A673 (cell line): ENCODE measurements at regions of chr4 and their contacts with region 1.

Region 1: GRCh38 chr4:184375027-184375426 is 99.3 kb downstream of the IRF2 start:
- DNase-seq: no peak
- H3K4me3 ChIP-seq: no peak overlapping the region
- H3K27ac ChIP-seq: no peak overlapping the region
- H3K4me1 ChIP-seq: peaks cover 20% of the 10 kb centered on the region
- H3K27me3 ChIP-seq: no peaks in the 10 kb centered on the region
- CTCF ChIP-seq: no peak

Region 2: GRCh38 chr4:184355111-184355604 is 19.9 kb before region 1 on chr4:
- CTCF ChIA-PET with region 1: interaction called, 12 read pairs
- POLR2A ChIA-PET with region 1: interaction called, 8 read pairs
- intact Hi-C with region 1: loop called (anchors 1 kb)
- DNase-seq: peak; percentile 98
- H3K4me3 ChIP-seq: no peak overlapping the region
- H3K27ac ChIP-seq: peak overlapping the region; percentile 93
- H3K4me1 ChIP-seq: peaks cover 57% of the 10 kb centered on the region
- H3K27me3 ChIP-seq: no peaks in the 10 kb centered on the region
- CTCF ChIP-seq: no peak

Region 3: GRCh38 chr4:184400375-184400870 is 25.4 kb after region 1 on chr4:
- CTCF ChIA-PET with region 1: interaction called, 3 read pairs
- POLR2A ChIA-PET with region 1: no interaction called
- intact Hi-C with region 1: loop called (anchors 1 kb)
- DNase-seq: peak; percentile 58
- H3K4me3 ChIP-seq: no peak overlapping the region
- H3K27ac ChIP-seq: peak overlapping the region; percentile 32
- H3K4me1 ChIP-seq: peaks cover 26% of the 10 kb centered on the region
- H3K27me3 ChIP-seq: no peaks in the 10 kb centered on the region
- CTCF ChIP-seq: no peak

Region 4: DNA sequence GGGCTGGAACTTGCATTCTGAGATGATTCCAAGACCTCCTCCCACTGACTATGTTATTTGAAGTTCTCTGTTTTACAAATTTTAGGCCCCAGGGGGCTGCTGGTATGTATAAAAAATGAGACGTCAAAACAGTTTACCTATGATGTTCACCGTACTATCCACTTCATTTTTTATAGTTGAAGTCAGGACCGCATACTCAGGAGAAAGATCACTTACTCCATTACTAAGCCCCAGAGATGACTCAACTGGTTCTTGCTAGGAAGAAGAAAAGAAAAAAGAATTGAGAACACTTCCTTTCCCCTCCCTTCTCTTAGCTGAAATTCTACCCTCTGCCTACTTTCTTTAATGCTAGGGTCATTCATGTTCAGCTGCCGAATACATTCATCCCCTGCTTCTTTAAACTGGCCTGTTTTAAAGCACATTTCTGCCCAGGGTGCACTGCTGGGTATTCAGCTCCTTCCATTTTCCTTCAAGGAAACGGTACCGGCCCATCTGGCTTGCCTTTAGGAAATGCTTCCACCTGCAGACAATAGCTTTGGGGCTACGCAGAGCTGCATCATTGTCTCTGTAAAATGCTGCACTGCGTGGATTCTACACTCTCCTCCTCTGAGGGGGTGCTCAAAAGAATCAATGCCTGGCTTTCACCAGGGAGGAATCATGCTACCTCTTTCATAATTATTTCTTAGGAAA is 33.1 kb after region 1 on chr4:
- CTCF ChIA-PET with region 1: no interaction called
- POLR2A ChIA-PET with region 1: interaction called, 11 read pairs
- intact Hi-C with region 1: no loop called
- DNase-seq: peak; percentile 60
- H3K4me3 ChIP-seq: no peak overlapping the region
- H3K27ac ChIP-seq: peak overlapping the region; percentile 31
- H3K4me1 ChIP-seq: peaks cover 19% of the 10 kb centered on the region
- H3K27me3 ChIP-seq: no peaks in the 10 kb centered on the region
- CTCF ChIP-seq: no peak

Region 5: GRCh38 chr4:184474263-184475095 is 99.5 kb after region 1 on chr4 and contains the start of gene IRF2:
- CTCF ChIA-PET with region 1: no interaction called
- POLR2A ChIA-PET with region 1: interaction called, 11 read pairs
- intact Hi-C with region 1: loop called (anchors 1 kb)
- DNase-seq: peak; percentile 99
- H3K4me3 ChIP-seq: peak within 1 kb of the TSS; percentile 91
- H3K27ac ChIP-seq: peak within 1 kb of the TSS; percentile 91
- H3K4me1 ChIP-seq: peaks cover 8% of the 10 kb centered on the region
- H3K27me3 ChIP-seq: no peaks in the 10 kb centered on the region
- CTCF ChIP-seq: no peak
- total RNA-seq, gene IRF2: 27.5 and 28.2 TPM in 2 replicates

Region 6: GRCh38 chr4:184538023-184538599 is 163.1 kb after region 1 on chr4:
- CTCF ChIA-PET with region 1: interaction called, 3 read pairs
- POLR2A ChIA-PET with region 1: no interaction called
- intact Hi-C with region 1: loop called (anchors 1 kb)
- DNase-seq: peak; percentile 90
- H3K4me3 ChIP-seq: peak overlapping the region; percentile 78
- H3K27ac ChIP-seq: peak overlapping the region; percentile 92
- H3K4me1 ChIP-seq: peaks cover 20% of the 10 kb centered on the region
- H3K27me3 ChIP-seq: no peaks in the 10 kb centered on the region
- CTCF ChIP-seq: peak; percentile 65